ENCODE measurements at regions of chr4 and their contacts with region 1.

Region 1: DNA sequence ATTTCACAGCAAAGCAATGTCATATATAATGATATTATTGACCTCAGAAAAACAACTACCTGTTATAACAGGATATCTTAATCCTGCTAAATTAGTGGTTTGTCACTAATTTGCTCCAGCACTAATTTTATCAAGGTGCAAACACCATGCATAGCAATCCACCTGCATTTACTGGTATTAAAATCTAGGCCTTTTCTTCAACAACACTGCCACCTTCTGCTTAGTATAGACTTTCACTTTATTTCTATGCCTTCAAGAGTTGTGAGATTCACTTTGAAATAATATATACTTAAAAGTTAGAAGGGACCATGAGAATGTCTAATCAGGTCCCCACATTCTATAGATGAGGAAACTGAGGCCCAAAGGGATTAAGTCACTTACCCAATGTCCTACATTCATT is 82.1 kb upstream of the IQCM start:
- DNase-seq: peak in 1 of 2 experiments; percentile 40
- H3K4me3 ChIP-seq: no peak overlapping the region
- H3K4me1 ChIP-seq: no peaks in the 10 kb centered on the region
- H3K27me3 ChIP-seq: peaks cover 4% of the 10 kb centered on the region

Region 2: DNA sequence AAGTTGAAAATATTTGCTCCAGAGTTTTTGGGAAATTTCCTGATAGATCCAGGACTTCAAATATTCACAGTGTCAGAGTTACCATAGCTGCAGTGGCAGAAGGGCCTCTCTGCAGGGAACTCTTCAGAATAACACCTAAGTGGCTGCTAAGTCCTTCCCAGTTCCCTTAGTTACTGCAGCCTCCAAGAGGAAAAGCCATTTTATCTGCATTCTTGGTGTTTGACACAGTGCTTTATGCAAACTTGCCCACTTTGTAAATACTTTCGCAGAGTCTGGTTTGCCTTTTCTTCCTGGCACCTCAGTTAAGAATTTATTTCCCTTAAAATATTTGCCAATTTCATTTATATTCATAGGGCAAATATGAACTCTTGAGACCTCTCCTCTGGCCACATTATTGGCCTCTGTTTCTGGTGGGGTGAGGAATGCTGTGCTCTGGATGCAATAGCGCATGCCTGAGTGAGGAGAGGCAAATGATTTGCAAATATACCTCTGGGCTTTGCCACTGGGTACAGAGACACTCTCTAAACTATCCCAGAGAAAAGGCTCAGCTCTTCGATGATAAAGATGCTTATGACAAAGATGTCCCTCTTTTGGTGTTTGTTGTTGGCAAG is 889.3 kb before region 1 on chr4:
- in situ Hi-C with region 1: no loop called
- DNase-seq: no peak
- H3K4me3 ChIP-seq: no peak overlapping the region
- H3K4me1 ChIP-seq: no peaks in the 10 kb centered on the region
- H3K27me3 ChIP-seq: no peaks in the 10 kb centered on the region

Region 3: GRCh38 chr4:149398993-149399392 is 498.8 kb before region 1 on chr4:
- in situ Hi-C with region 1: loop called (anchors 25 kb)
- DNase-seq: no peak
- H3K4me3 ChIP-seq: no peak overlapping the region
- H3K4me1 ChIP-seq: no peaks in the 10 kb centered on the region
- H3K27me3 ChIP-seq: no peaks in the 10 kb centered on the region

Region 4: GRCh38 chr4:149684516-149684915 is 213.3 kb before region 1 on chr4:
- in situ Hi-C with region 1: no loop called
- DNase-seq: no peak
- H3K4me3 ChIP-seq: no peak overlapping the region
- H3K4me1 ChIP-seq: no peaks in the 10 kb centered on the region
- H3K27me3 ChIP-seq: no peaks in the 10 kb centered on the region; the same call in 1 of the 2 replicates

Region 5: DNA sequence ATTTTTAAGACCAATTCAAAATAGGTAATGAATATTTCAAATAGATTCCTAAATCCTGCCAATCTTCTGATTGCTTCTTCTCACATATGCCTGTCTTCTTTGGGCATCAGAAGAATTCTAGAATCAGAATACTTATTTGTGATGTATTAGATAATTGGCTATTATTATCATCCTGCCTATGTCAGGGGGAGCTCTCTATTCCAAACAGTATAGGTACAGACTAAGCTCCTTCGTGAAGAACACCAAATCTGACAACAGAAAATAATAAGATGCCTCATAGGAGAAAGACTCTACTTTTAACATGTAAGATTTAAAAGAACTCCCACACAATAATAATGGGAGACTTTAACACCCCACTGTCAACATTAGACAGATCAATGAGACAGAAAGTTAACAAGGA is 82.0 kb before region 1 on chr4 and contains the start of gene IQCM:
- in situ Hi-C with region 1: no loop called
- DNase-seq: no peak
- H3K4me3 ChIP-seq: no peak within 1 kb of the TSS
- H3K4me1 ChIP-seq: no peaks in the 10 kb centered on the region
- H3K27me3 ChIP-seq: no peaks in the 10 kb centered on the region

Region 6: GRCh38 chr4:150126201-150126863 is 228.5 kb after region 1 on chr4:
- in situ Hi-C with region 1: no loop called
- DNase-seq: no peak
- H3K4me3 ChIP-seq: no peak overlapping the region
- H3K4me1 ChIP-seq: no peaks in the 10 kb centered on the region
- H3K27me3 ChIP-seq: no peaks in the 10 kb centered on the region